Sciatic nerve (tissue), 2 donors: ENCODE measurements at regions of chr4 and their contacts with region 1.

Region 1: DNA sequence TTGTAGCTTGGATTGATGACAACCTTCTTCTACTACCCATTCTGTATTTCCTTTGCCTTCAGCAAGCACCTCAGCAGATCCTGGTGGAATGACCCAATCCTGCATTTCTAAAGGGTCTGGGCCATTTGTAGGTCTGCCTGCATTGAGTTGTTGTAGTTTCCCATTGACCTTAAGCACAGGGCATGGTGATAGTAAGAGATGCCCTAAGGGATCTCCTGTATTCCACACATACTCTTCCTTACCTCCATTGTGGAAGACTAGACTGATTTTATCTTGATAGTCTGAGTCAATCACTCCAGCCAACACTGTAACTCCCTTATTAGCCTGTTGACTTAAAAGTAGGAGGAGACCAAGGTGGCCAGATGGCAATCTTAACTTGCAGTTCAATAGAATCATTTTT is 184.5 kb downstream of the GRIA2 start:
- DNase-seq: no peak
- ATAC-seq: no peak

Region 2: DNA sequence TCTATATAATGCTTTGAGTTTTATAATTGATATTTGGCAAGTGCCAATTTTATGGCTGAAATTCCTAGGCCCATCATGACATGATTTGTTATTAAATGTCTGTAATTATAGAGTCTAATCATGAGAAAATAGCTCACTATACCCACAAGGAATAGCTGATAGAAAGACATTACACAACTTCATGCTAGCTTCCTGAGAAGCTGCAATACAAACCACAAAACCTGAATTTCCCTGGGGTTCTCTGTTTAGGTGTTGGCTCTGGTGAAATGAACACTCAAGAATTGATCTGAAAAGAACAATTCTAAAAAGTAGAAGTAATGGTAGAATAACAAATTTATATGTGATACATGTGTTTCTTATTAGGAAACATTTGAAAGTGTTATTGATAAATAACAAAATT is 598.1 kb after region 1 on chr4:
- intact Hi-C with region 1: no loop called
- DNase-seq: no peak
- ATAC-seq: no peak

Region 3: DNA sequence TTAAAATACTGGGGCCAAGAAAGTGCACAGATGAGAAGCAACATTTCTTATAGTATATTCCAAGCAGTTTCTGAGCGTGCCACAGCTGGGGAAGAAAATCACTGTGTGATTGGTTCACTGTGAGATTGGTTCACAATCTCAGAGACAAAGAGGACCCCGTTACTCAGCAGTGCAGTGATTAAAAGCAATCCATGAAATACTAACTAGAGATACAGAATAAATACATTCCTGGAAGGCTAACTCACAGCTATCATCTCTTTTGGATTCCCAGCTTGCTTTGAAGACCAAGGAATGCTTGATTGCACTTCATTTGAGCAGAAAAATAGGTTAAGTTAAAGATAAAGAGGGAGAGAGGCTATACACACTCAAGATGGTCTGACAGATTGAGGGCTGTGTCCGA is 1565.7 kb after region 1 on chr4:
- intact Hi-C with region 1: loop called (anchors 5 kb)
- DNase-seq: no peak
- ATAC-seq: no peak